HCT116 (cell line): ENCODE measurements at regions of chr13 and their contacts with region 1.

Region 1: GRCh38 chr13:51797664-51798488 is 6.1 kb downstream of the DHRS12 start:
- DNase-seq: peak; percentile 66
- ATAC-seq: peak; percentile 81
- H3K4me3 ChIP-seq: no peak overlapping the region
- H3K27ac ChIP-seq: no peak overlapping the region
- H3K4me1 ChIP-seq: peaks cover 25 to 30% of the 10 kb centered on the region in 2 experiments
- H3K27me3 ChIP-seq: no peaks in the 10 kb centered on the region
- CTCF ChIP-seq: peak in 2 of 3 experiments; percentile 64 to 70; a peak in 4 of 6 replicates
- POLR2A ChIP-seq: no peak
- RAD21 ChIP-seq: no peak

Region 2: DNA sequence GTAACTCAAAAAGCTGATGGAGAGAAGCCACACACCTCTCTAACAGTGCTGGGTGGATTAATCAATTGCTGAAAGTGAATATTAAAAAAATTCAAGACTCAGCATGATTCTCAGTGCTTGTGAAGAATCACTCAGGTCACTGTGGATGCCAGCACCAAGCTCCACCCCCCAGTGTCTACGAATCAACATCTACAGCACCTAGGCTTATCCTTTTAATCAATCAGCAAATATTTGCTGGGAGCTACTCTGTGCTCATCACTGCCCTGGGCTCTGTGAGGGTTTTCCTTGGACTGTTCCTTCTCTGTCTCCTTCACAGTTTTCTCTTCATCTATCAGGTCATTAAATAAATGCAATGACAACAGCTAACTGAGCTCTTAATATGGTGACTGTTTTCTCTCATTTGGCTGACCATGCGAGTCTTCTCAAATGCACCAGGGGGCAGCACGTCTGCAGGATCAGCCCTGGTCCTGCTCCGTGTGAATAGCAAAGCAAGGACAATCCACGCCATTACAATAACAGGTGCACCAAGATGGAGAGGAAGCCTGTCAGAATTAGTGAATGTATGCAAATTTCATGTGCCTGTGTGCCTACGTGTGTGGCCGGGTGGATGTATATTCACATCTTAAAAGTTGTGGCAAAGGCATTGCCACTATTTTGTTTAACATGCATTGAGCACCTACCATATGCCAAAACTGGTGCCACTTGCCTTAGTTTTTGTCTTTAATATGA is 672.2 kb before region 1 on chr13:
- CTCF ChIA-PET with region 1: interaction called, 69 read pairs
- POLR2A ChIA-PET with region 1: interaction called, 8 read pairs
- RAD21 ChIA-PET with region 1: interaction called, 10 to 17 read pairs
- intact Hi-C with region 1: loop called (anchors 1 kb)
- DNase-seq: peak; percentile 60
- ATAC-seq: peak; percentile 96
- H3K4me3 ChIP-seq: no peak overlapping the region
- H3K27ac ChIP-seq: no peak overlapping the region
- H3K4me1 ChIP-seq: peaks cover 4 to 8% of the 10 kb centered on the region in 2 experiments; a peak in 2 of 4 replicates
- H3K27me3 ChIP-seq: no peaks in the 10 kb centered on the region
- CTCF ChIP-seq: peak; percentile 82 to 96 (median 87)
- POLR2A ChIP-seq: no peak
- RAD21 ChIP-seq: peak; percentile 86

Region 3: DNA sequence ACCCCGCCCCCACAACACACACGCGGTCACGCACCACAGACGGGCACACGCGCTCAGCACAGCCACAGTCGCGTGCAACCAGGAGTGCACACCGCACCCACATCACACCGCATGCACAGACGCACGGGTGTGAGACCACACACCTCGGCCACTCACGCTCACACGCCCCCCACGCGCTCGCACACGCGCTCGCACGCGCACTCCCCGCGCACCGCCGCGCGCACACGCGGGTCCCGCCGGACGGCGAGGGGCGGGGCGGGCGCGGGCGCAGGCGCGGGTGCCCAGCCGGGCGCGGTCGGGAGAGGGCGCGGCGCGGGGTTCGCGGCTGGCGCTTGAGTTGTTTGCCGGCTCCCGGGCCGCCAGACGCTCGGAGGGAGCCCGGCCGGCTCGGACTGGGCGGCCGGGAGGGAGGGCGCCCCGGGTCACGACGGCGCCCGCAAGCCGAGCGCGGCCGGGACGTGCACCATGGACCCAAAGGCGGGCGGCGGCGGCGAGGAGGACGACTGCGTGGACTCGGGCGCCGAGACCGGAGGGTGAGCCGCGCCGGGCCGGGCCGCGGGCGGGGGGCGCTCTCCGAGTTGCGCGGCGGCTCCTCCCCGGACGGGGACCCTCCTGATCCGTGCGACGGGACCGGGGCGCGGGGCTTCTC is 575.7 kb before region 1 on chr13 and contains the start of gene FAM124A:
- CTCF ChIA-PET with region 1: interaction called, 3 read pairs
- POLR2A ChIA-PET with region 1: no interaction called
- RAD21 ChIA-PET with region 1: no interaction called
- intact Hi-C with region 1: loop called (anchors 5 kb)
- DNase-seq: peak; percentile 4
- ATAC-seq: peak; percentile 93
- H3K4me3 ChIP-seq: peak within 1 kb of the TSS; percentile 66 to 73
- H3K27ac ChIP-seq: peak within 1 kb of the TSS; percentile 28; the same call in 1 of the 2 replicates
- H3K4me1 ChIP-seq: peaks cover 4 to 14% of the 10 kb centered on the region in 2 experiments; a peak in 3 of 4 replicates
- H3K27me3 ChIP-seq: no peaks in the 10 kb centered on the region
- CTCF ChIP-seq: 0 out of 6 replicates have a peak, but pooled peaks of 1 of the 3 experiments have one; percentile 22
- POLR2A ChIP-seq: no peak
- RAD21 ChIP-seq: no peak
- total RNA-seq, gene FAM124A: 3.1 TPM

Region 4: GRCh38 chr13:51435002-51435578 is 362.8 kb before region 1 on chr13:
- CTCF ChIA-PET with region 1: interaction called, 90 read pairs
- POLR2A ChIA-PET with region 1: interaction called, 4 read pairs
- RAD21 ChIA-PET with region 1: interaction called in 1 of 2 experiments, 7 read pairs
- intact Hi-C with region 1: loop called (anchors 1 kb)
- DNase-seq: no peak
- ATAC-seq: no peak
- H3K4me3 ChIP-seq: no peak overlapping the region
- H3K27ac ChIP-seq: no peak overlapping the region
- H3K4me1 ChIP-seq: no peaks in the 10 kb centered on the region
- H3K27me3 ChIP-seq: no peaks in the 10 kb centered on the region
- CTCF ChIP-seq: peak; percentile 45 to 54 (median 48); a peak in 5 of 6 replicates
- POLR2A ChIP-seq: no peak
- RAD21 ChIP-seq: peak; percentile 60

Region 5: DNA sequence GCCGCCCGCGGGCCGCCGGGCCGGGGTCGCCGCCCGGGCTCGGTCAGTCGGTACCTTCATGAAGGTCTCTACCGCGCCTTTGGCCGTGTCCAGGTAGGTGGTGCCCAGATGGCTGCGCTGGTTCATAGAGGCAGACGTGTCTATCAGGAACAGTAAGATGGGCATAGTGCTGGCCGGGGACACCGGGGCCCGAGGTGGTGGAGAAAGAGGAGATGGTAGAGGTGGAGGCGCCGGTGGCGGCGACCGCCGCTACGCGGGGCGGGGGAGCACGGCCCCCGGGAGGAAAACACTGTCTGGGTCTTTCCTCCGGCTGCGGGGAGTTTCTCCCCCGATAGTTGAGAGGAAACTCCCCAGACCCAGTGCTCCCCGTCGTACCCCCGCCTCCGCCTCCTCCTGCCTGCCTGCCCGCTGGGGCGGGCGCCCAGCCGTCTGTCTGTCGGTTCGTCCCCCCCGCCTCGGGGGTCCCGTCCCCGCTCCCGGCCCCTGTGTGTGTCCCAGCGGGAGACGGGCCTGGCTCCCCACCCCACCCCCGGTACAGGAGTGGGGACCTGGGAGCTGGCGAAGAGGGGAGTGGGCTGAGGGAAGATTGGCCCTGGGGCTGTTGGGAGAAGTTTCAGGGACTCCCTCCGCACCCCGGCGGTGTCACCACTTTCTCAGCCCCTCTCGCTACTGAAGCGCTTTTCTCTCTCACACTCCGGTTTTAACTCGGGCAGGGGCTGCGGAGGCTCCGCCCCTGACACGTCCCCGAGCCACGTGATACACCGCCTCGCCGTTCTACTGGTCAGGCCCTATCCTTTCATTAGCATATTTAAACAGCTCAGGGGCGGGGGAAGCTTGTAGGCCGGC is 345.3 kb before region 1 on chr13 and contains the start of gene INTS6:
- CTCF ChIA-PET with region 1: interaction called, 4 read pairs
- POLR2A ChIA-PET with region 1: interaction called, 14 read pairs
- RAD21 ChIA-PET with region 1: interaction called in 1 of 2 experiments, 3 read pairs
- intact Hi-C with region 1: loop called (anchors 2 kb)
- DNase-seq: peak; percentile 98
- ATAC-seq: peak; percentile 88
- H3K4me3 ChIP-seq: peak within 1 kb of the TSS; percentile 86
- H3K27ac ChIP-seq: peak within 1 kb of the TSS; percentile 95
- H3K4me1 ChIP-seq: peaks cover 6 to 15% of the 10 kb centered on the region in 2 experiments; a peak in 3 of 4 replicates
- H3K27me3 ChIP-seq: no peaks in the 10 kb centered on the region
- CTCF ChIP-seq: no peak
- POLR2A ChIP-seq: peak; percentile 97
- RAD21 ChIP-seq: no peak
- total RNA-seq, gene INTS6: 44.7 TPM